Activated CD4-positive, alpha-beta memory T cell treated with anti-CD3 and anti-CD28 coated beads, Interleukin-2, amount 10 ng/mL, durations not matched to agents 7 days and 5 days (primary cell): ENCODE measurements at regions of chr1 and their contacts with region 1.

Region 1: DNA sequence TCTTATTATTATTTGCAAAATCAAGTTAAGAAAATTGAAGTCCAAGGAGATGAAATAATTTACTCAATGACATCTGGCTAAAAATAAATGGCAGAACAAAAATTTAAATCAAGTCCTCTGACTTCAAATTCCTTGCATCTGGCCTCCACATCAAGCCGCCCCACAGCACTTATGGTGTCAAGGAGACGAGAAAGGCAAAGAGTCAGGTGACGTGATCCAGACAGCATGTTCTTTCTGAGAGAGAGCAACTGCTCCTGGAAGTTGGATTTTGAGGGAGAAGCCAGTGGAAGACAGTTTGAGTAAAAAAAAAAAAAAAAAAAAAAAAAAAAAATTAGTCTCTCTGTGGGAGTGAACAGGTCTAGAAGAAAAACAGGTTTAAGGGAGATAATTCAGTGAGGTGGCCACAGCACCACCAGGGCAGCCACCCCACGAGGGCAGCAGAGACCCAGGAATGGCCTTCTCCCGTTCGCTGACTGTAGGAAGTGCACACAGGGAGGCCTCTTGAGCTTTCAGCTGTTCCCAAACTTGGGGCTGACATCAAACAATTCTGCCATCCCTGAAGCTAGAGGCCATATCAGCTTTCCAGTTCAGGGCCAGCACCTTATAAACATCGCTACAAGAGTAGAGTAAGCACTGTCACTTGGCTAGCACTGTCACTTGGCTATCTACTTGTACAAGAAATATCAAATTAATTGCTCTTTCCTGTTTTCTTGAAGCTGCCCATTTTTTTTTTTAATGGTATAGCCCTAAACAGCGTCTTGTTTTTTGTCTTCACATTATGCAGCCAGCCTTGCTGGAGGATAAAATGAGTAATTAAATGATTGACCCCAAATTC is 7.8 kb downstream of the C1orf162 start:
- DNase-seq: peak; percentile 69
- H3K4me3 Mint-ChIP-seq: no peak overlapping the region
- H3K27ac Mint-ChIP-seq: no peak overlapping the region
- H3K4me1 Mint-ChIP-seq: peaks cover 23% of the 10 kb centered on the region
- H3K27me3 Mint-ChIP-seq: peaks cover 42% of the 10 kb centered on the region

Region 2: GRCh38 chr1:111222308-111223125 is 259.1 kb before region 1 on chr1:
- CTCF ChIA-PET with region 1: no interaction called
- POLR2A ChIA-PET with region 1: interaction called, 11 read pairs
- DNase-seq: peak; percentile 82
- H3K4me3 Mint-ChIP-seq: peak overlapping the region; percentile 19
- H3K27ac Mint-ChIP-seq: peak overlapping the region; percentile 78
- H3K4me1 Mint-ChIP-seq: peaks cover 87% of the 10 kb centered on the region
- H3K27me3 Mint-ChIP-seq: no peaks in the 10 kb centered on the region

Region 3: DNA sequence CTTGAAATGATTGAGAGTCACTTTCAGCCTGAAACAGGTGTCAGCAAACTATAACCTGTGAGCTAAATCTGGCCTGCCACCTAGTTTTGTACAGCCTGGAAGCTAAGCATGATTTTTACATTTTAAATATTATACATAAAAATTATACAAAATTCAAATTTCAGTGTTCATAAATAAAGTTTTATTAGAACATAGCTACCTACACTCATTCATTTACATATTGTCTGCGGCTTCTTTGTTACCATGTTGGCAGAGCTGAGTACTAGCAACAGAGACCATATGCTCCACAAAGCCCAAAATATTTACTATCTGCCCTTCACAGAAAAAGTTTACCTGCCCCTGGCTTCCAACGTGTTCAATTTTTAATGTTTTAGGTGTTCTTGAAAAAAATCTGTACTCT is 15.8 kb before region 1 on chr1:
- CTCF ChIA-PET with region 1: interaction called, 3 read pairs
- POLR2A ChIA-PET with region 1: interaction called, 15 read pairs
- DNase-seq: no peak
- H3K4me3 Mint-ChIP-seq: no peak overlapping the region
- H3K27ac Mint-ChIP-seq: no peak overlapping the region
- H3K4me1 Mint-ChIP-seq: peaks cover 5% of the 10 kb centered on the region
- H3K27me3 Mint-ChIP-seq: no peaks in the 10 kb centered on the region

Region 4: DNA sequence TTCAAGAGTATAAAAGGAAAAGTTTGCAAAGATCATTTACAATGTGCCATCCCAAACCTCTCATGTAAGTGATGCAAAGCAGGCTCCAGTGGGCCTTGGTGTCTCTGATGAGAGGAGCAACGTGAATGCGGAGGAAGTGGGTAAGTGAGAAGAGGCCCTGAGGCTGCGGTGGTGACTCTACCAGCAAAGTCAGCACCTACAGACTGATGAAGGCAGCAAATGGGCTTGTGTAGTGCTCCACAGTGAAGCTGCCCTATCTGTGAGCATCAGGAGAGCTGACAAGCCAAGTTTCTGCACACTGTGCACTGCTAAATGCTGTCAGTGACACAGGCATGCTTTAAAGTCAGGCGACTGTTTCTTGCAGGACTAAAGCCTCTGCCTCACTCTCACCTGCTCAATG is 122.4 kb after region 1 on chr1:
- CTCF ChIA-PET with region 1: interaction called, 3 read pairs
- POLR2A ChIA-PET with region 1: interaction called, 10 read pairs
- DNase-seq: peak; percentile 92
- H3K4me3 Mint-ChIP-seq: peak overlapping the region; percentile 76
- H3K27ac Mint-ChIP-seq: peak overlapping the region; percentile 98
- H3K4me1 Mint-ChIP-seq: peaks cover 75% of the 10 kb centered on the region
- H3K27me3 Mint-ChIP-seq: no peaks in the 10 kb centered on the region

Region 5: GRCh38 chr1:111747282-111747734 is 265.7 kb after region 1 on chr1:
- CTCF ChIA-PET with region 1: interaction called, 31 read pairs
- POLR2A ChIA-PET with region 1: interaction called, 3 read pairs
- DNase-seq: peak; percentile 79
- H3K4me3 Mint-ChIP-seq: no peak overlapping the region
- H3K27ac Mint-ChIP-seq: no peak overlapping the region
- H3K4me1 Mint-ChIP-seq: peaks cover 12% of the 10 kb centered on the region
- H3K27me3 Mint-ChIP-seq: peaks cover 20% of the 10 kb centered on the region